ENCODE measurements at regions of chr14 and their contacts with region 1.

Region 1: GRCh38 chr14:65170768-65171507 is 68.6 kb upstream of the MAX start:
- DNase-seq: peak; percentile 40
- ATAC-seq: peak; percentile 55
- H3K4me3 ChIP-seq: peak overlapping the region; percentile 57
- H3K27ac ChIP-seq: peak overlapping the region; percentile 59
- H3K4me1 ChIP-seq: peaks cover 26% of the 10 kb centered on the region
- H3K27me3 ChIP-seq: no peaks in the 10 kb centered on the region
- CTCF ChIP-seq: peak in 2 of 3 experiments; percentile 25 to 43; a peak in 3 of 6 replicates
- EP300 ChIP-seq: no peak
- POLR2A ChIP-seq: 0 out of 2 replicates have a peak, but pooled peaks have one; percentile 44
- RAD21 ChIP-seq: peak; percentile 46

Region 2: DNA sequence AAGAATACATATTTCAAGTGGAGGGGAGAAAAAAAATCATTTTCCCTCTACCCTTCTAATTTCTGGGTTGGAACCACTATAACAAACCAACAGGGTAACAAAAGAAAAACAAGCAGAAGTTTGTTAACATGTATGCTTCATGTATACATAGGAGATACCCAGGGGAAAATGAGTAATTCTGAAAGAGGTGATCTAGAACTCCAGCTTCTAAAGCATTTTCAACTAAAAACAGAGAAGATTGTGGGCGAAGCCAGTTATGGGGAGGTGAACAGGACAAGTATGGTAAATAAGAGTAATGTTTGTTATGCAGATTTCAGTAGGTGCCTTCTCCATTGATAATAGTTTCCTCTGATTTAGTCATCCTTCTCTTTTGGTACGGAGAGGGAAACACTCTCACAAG is 167.5 kb before region 1 on chr14:
- CTCF ChIA-PET with region 1: no interaction called
- POLR2A ChIA-PET with region 1: no interaction called
- RAD21 ChIA-PET with region 1: no interaction called
- SMC1A ChIA-PET with region 1: no interaction called
- in situ Hi-C with region 1: no loop called
- intact Hi-C with region 1: no loop called
- DNase-seq: peak; percentile 55
- ATAC-seq: peak; percentile 85
- H3K4me3 ChIP-seq: 0 out of 2 replicates have a peak overlapping the region, but pooled peaks have one; percentile 19
- H3K27ac ChIP-seq: peak overlapping the region; percentile 59
- H3K4me1 ChIP-seq: peaks cover 28% of the 10 kb centered on the region
- H3K27me3 ChIP-seq: no peaks in the 10 kb centered on the region
- CTCF ChIP-seq: no peak
- EP300 ChIP-seq: 0 out of 4 replicates have a peak, but pooled peaks of 1 of the 2 experiments have one; percentile 30
- POLR2A ChIP-seq: no peak
- RAD21 ChIP-seq: 0 out of 2 replicates have a peak, but pooled peaks have one; percentile 8

Region 3: GRCh38 chr14:65195042-65195719 is 24.2 kb after region 1 on chr14:
- CTCF ChIA-PET with region 1: interaction called, 8 read pairs
- POLR2A ChIA-PET with region 1: interaction called, 4 read pairs
- RAD21 ChIA-PET with region 1: no interaction called
- SMC1A ChIA-PET with region 1: interaction called, 16 read pairs
- in situ Hi-C with region 1: no loop called
- intact Hi-C with region 1: no loop called
- DNase-seq: peak; percentile 68
- ATAC-seq: peak; percentile 96
- H3K4me3 ChIP-seq: peak overlapping the region; percentile 37
- H3K27ac ChIP-seq: peak overlapping the region; percentile 75
- H3K4me1 ChIP-seq: peaks cover 21% of the 10 kb centered on the region
- H3K27me3 ChIP-seq: no peaks in the 10 kb centered on the region
- CTCF ChIP-seq: no peak
- EP300 ChIP-seq: peak in 1 of 2 experiments; percentile 70; a peak in 2 of 4 replicates
- POLR2A ChIP-seq: no peak
- RAD21 ChIP-seq: 0 out of 2 replicates have a peak, but pooled peaks have one; percentile 1

Region 4: DNA sequence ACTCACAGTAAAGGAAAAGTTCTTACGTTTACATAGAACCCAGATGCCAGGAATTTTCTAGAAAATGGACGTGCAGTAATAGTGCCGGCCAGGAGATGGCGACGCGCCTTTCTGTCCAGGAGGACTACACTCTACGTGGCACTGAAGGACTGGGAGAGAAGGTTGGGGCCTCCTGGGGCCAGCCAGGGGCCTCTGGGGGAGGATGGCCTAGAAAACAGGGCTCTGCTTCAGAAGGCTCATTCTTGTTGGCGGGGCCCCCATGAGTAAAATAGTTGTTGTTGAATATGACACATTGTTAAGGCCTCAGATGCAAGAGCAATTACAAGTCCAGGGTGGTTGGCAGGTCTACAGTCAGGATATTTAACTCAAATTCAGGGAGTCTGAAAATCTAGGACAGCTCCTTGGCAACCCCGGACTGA is 51.5 kb after region 1 on chr14:
- CTCF ChIA-PET with region 1: interaction called, 6 read pairs
- POLR2A ChIA-PET with region 1: interaction called, 5 read pairs
- RAD21 ChIA-PET with region 1: interaction called, 3 read pairs
- SMC1A ChIA-PET with region 1: interaction called, 18 read pairs
- in situ Hi-C with region 1: no loop called
- intact Hi-C with region 1: no loop called
- DNase-seq: no peak
- ATAC-seq: peak; percentile 86
- H3K4me3 ChIP-seq: no peak overlapping the region
- H3K27ac ChIP-seq: peak overlapping the region; percentile 20; the same call in 1 of the 2 replicates
- H3K4me1 ChIP-seq: peaks cover 31% of the 10 kb centered on the region
- H3K27me3 ChIP-seq: no peaks in the 10 kb centered on the region
- CTCF ChIP-seq: peak; percentile 84 to 91 (median 84)
- EP300 ChIP-seq: no peak
- POLR2A ChIP-seq: no peak
- RAD21 ChIP-seq: peak; percentile 95

Region 5: GRCh38 chr14:65356327-65356852 is 185.5 kb after region 1 on chr14:
- CTCF ChIA-PET with region 1: no interaction called
- POLR2A ChIA-PET with region 1: no interaction called
- RAD21 ChIA-PET with region 1: no interaction called
- SMC1A ChIA-PET with region 1: interaction called, 4 read pairs
- in situ Hi-C with region 1: no loop called
- intact Hi-C with region 1: loop called (anchors 5 kb)
- DNase-seq: no peak
- ATAC-seq: no peak
- H3K4me3 ChIP-seq: no peak overlapping the region
- H3K27ac ChIP-seq: peak overlapping the region; percentile 72
- H3K4me1 ChIP-seq: peaks cover 64% of the 10 kb centered on the region
- H3K27me3 ChIP-seq: no peaks in the 10 kb centered on the region
- CTCF ChIP-seq: no peak
- EP300 ChIP-seq: no peak
- POLR2A ChIP-seq: no peak
- RAD21 ChIP-seq: no peak

Region 6: GRCh38 chr14:65958664-65959562 is 788.0 kb after region 1 on chr14:
- CTCF ChIA-PET with region 1: interaction called, 4 read pairs
- POLR2A ChIA-PET with region 1: no interaction called
- RAD21 ChIA-PET with region 1: interaction called, 10 read pairs
- SMC1A ChIA-PET with region 1: interaction called, 11 read pairs
- in situ Hi-C with region 1: loop called (anchors 5 kb)
- intact Hi-C with region 1: no loop called
- DNase-seq: no peak
- ATAC-seq: peak; percentile 82
- H3K4me3 ChIP-seq: no peak overlapping the region
- H3K27ac ChIP-seq: no peak overlapping the region
- H3K4me1 ChIP-seq: no peaks in the 10 kb centered on the region
- H3K27me3 ChIP-seq: peaks cover 2 to 4% of the 10 kb centered on the region in 2 experiments; a peak in 2 of 4 replicates
- CTCF ChIP-seq: peak; percentile 22 to 55 (median 42); a peak in 4 of 6 replicates
- EP300 ChIP-seq: no peak
- POLR2A ChIP-seq: no peak
- RAD21 ChIP-seq: peak; percentile 57